HCT116 (cell line): ENCODE measurements at regions of chr17 and their contacts with region 1.

Region 1: GRCh38 chr17:13002766-13003451 is 14.9 kb downstream of the ELAC2 start:
- DNase-seq: peak; percentile 34
- ATAC-seq: peak; percentile 92
- H3K4me3 ChIP-seq: no peak overlapping the region
- H3K27ac ChIP-seq: no peak overlapping the region
- H3K4me1 ChIP-seq: no peaks in the 10 kb centered on the region
- H3K27me3 ChIP-seq: no peaks in the 10 kb centered on the region
- CTCF ChIP-seq: peak; percentile 50 to 92 (median 69); a peak in 5 of 6 replicates
- POLR2A ChIP-seq: no peak
- RAD21 ChIP-seq: peak; percentile 76

Region 2: GRCh38 chr17:12180644-12181261 is 822.2 kb before region 1 on chr17:
- CTCF ChIA-PET with region 1: no interaction called
- POLR2A ChIA-PET with region 1: no interaction called
- RAD21 ChIA-PET with region 1: no interaction called
- intact Hi-C with region 1: loop called (anchors 2 kb)
- DNase-seq: peak; percentile 47
- ATAC-seq: peak; percentile 79
- H3K4me3 ChIP-seq: no peak overlapping the region
- H3K27ac ChIP-seq: no peak overlapping the region
- H3K4me1 ChIP-seq: no peaks in the 10 kb centered on the region
- H3K27me3 ChIP-seq: no peaks in the 10 kb centered on the region
- CTCF ChIP-seq: peak; percentile 51 to 89 (median 70); a peak in 5 of 6 replicates
- POLR2A ChIP-seq: no peak
- RAD21 ChIP-seq: peak; percentile 71

Region 3: DNA sequence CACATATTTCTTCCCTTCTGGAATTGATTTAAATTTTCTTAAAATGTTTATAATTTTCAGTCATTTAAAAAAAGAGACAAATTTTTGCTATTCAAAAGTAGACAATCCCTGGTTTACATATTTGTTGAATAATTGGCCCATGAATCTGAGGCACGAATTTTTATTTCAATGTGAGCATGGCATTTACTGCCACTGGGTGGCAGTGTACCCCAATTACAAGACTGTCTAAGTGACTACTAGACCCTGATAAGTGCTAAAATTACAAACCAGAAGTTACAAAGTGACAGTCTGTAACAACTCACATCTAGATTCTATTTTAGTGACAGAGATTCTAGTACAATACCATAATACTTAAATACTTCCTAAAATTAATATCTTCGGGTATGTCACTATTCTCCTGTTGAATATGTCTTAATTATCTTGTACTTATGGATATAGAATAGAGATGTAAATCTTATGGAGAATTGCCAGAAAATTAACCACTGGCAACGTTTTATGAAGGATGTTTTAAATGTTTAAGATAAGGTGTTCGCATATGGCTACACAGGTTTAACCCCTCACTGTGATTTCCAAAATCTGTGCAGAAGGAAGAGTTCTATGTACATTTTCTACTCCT is 746.4 kb before region 1 on chr17:
- CTCF ChIA-PET with region 1: no interaction called
- POLR2A ChIA-PET with region 1: no interaction called
- RAD21 ChIA-PET with region 1: no interaction called
- intact Hi-C with region 1: loop called (anchors 1 kb)
- DNase-seq: peak; percentile 37
- ATAC-seq: peak; percentile 74
- H3K4me3 ChIP-seq: no peak overlapping the region
- H3K27ac ChIP-seq: no peak overlapping the region
- H3K4me1 ChIP-seq: no peaks in the 10 kb centered on the region
- H3K27me3 ChIP-seq: peaks cover 30% of the 10 kb centered on the region; the same call in 1 of the 2 replicates
- CTCF ChIP-seq: peak; percentile 54 to 81 (median 73); a peak in 5 of 6 replicates
- POLR2A ChIP-seq: no peak
- RAD21 ChIP-seq: peak; percentile 68

Region 4: DNA sequence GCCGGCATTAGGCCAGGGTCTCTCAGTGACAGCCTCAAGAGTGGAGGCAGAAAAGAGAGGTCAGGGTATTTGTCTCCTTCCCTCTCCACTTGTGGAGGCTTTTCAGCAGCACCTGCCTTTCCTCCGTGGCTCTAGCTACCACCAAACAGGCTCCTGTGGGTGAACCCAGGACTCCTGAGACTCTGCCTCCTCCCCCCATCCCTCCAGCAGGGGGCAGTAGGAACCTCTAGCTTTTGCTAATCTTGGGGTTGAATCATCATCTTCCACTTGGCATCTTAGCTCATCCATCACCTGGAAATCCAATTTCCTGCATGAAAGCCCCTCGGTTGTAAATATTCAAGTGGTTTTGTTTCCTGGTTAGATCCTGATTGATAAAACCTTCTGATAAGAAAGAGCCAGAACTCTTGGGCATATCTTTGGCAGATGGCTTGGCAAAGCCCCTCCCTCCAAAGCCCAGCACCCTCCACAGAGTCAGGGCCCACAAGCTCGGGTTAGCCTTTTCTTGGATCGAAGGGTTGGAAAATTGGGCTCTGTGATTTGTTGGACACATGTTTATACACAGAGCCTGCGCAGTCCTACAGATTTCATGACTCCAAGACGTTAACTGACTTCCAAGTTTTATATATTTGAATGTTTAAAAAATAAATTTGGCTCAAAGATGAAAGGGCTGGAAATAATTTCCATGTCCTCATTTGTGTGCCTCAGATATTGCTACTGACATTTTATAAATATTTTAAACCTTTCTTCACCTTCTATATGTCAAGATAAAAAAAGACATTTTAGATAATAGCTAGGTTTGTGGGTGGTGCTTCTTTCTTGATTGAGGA is 660.1 kb before region 1 on chr17:
- CTCF ChIA-PET with region 1: interaction called, 4 read pairs
- POLR2A ChIA-PET with region 1: no interaction called
- RAD21 ChIA-PET with region 1: no interaction called
- intact Hi-C with region 1: loop called (anchors 2 kb)
- DNase-seq: peak; percentile 8
- ATAC-seq: peak; percentile 82
- H3K4me3 ChIP-seq: no peak overlapping the region
- H3K27ac ChIP-seq: no peak overlapping the region
- H3K4me1 ChIP-seq: no peaks in the 10 kb centered on the region
- H3K27me3 ChIP-seq: peaks cover 17% of the 10 kb centered on the region
- CTCF ChIP-seq: peak; percentile 22 to 85 (median 71); a peak in 5 of 6 replicates
- POLR2A ChIP-seq: no peak
- RAD21 ChIP-seq: peak; percentile 45

Region 5: GRCh38 chr17:12830777-12831247 is 172.1 kb before region 1 on chr17:
- CTCF ChIA-PET with region 1: no interaction called
- POLR2A ChIA-PET with region 1: no interaction called
- RAD21 ChIA-PET with region 1: no interaction called
- intact Hi-C with region 1: no loop called
- DNase-seq: no peak
- ATAC-seq: no peak
- H3K4me3 ChIP-seq: no peak overlapping the region
- H3K27ac ChIP-seq: no peak overlapping the region
- H3K4me1 ChIP-seq: no peaks in the 10 kb centered on the region
- H3K27me3 ChIP-seq: no peaks in the 10 kb centered on the region
- CTCF ChIP-seq: no peak
- POLR2A ChIP-seq: no peak
- RAD21 ChIP-seq: no peak

Region 6: GRCh38 chr17:12928741-12929140 is 74.2 kb before region 1 on chr17:
- CTCF ChIA-PET with region 1: no interaction called
- POLR2A ChIA-PET with region 1: no interaction called
- RAD21 ChIA-PET with region 1: no interaction called
- intact Hi-C with region 1: loop called (anchors 2 kb)
- DNase-seq: no peak
- ATAC-seq: peak; percentile 86
- H3K4me3 ChIP-seq: no peak overlapping the region
- H3K27ac ChIP-seq: no peak overlapping the region
- H3K4me1 ChIP-seq: no peaks in the 10 kb centered on the region
- H3K27me3 ChIP-seq: no peaks in the 10 kb centered on the region
- CTCF ChIP-seq: peak; percentile 24 to 43 (median 36); a peak in 4 of 6 replicates
- POLR2A ChIP-seq: no peak
- RAD21 ChIP-seq: peak; percentile 42; the same call in 1 of the 2 replicates